CD4-positive, alpha-beta memory T cell (primary cell): ENCODE measurements at regions of chr17 and their contacts with region 1.

Region 1: GRCh38 chr17:50345432-50346312 is at the start of gene XYLT2:
- DNase-seq: peak; percentile 86 to 94 (median 93)
- H3K4me3 ChIP-seq: peak within 1 kb of the TSS; percentile 65 to 80
- H3K4me3 Mint-ChIP-seq: peak within 1 kb of the TSS; percentile 88 to 94 (median 91)
- H3K27ac ChIP-seq: peak within 1 kb of the TSS; percentile 72
- H3K27ac Mint-ChIP-seq: peak within 1 kb of the TSS; percentile 88 to 96 (median 92)
- H3K4me1 ChIP-seq: peaks cover 31% of the 10 kb centered on the region
- H3K4me1 Mint-ChIP-seq: peaks cover 15 to 55% (median 33%) of the 10 kb centered on the region in 4 donors
- H3K27me3 ChIP-seq: no peaks in the 10 kb centered on the region
- H3K27me3 Mint-ChIP-seq: no peaks in the 10 kb centered on the region
- total RNA-seq, gene XYLT2: 37.6 to 41.1 TPM

Region 2: DNA sequence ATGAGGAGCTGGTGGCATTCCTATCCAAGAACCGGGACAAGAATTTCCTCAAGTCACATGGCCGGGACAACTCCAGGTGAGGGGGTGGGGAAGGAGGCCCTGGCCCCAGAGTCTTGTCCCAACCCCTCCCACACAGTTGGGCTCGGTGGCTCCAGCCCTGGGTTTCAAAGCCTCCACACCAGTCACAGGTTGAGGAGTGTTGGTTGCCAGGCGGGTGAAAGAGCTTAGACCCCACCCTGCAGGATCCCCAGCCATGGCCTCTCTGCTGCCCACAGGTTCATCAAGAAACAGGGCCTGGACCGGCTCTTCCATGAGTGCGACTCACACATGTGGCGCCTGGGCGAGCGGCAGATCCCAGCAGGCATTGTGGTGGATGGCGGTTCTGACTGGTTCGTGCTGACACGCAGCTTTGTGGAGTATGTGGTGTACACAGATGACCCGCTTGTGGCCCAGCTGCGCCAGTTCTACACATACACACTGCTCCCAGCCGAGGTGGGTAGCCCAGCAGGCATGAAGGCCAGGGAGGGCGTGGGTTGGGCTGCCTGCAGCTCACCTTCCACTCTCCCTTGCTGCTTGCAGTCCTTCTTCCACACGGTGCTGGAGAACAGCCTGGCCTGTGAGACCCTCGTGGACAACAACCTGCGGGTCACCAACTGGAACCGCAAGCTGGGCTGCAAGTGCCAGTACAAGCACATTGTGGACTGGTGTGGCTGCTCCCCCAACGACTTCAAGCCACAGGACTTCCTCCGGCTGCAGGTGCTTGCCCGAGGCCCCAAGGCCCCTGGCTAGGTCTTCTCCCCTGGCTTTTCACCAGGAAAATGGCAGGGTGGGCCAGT is 10.1 kb after region 1 on chr17:
- CTCF ChIA-PET with region 1: interaction called, 35 read pairs
- POLR2A ChIA-PET with region 1: interaction called, 25 read pairs
- intact Hi-C with region 1: no loop called
- DNase-seq: no peak
- H3K4me3 ChIP-seq: no peak overlapping the region
- H3K4me3 Mint-ChIP-seq: no peak overlapping the region
- H3K27ac ChIP-seq: no peak overlapping the region
- H3K27ac Mint-ChIP-seq: no peak overlapping the region
- H3K4me1 ChIP-seq: no peaks in the 10 kb centered on the region
- H3K4me1 Mint-ChIP-seq: peaks cover 0 to 15% (median 10%) of the 10 kb centered on the region in 4 donors
- H3K27me3 ChIP-seq: no peaks in the 10 kb centered on the region
- H3K27me3 Mint-ChIP-seq: no peaks in the 10 kb centered on the region

Region 3: DNA sequence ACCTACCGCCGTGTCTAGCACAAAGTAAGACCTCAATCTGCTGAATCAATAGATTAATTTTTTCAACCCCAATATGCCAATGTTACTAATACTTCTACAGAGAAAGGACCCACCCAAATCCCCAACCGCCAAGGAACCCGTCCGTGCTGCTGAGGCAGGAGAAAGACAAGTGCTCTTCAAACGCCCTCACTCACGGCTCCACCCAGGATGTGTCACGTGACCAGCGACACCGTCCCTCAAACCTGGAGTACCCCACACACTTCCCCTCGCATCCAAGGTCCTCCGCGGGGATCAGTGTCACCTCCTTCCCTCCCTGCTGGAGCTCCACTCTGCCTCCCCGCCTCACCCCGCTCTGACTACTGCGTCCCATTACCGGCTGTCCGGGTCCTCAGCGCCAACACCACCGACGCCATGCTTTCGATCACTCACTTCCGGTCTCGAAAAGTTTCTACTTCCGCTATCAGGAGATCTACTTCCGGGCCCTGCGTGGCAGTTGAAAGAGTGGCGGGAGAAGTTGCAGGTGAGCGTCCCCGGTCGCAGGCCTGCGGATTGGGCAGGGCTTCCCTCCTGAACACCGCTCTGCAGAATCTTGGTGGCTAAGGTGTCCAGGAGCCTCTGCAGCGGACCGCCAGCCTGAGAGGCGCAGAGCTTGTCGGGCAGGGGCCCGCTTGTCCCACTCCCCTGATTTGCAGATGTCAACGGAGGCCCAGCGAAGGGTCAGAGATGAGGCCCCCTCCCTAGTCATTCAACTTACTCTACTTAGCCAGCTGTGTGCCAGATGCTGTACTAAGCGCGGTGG is 27.3 kb after region 1 on chr17 and contains the starts of genes EME1 and MRPL27:
- CTCF ChIA-PET with region 1: interaction called, 3 read pairs
- POLR2A ChIA-PET with region 1: interaction called, 14 read pairs
- intact Hi-C with region 1: loop called (anchors 1 kb)
- DNase-seq: peak; percentile 90 to 94 (median 90)
- H3K4me3 ChIP-seq: peak within 1 kb of the TSS; percentile 96 to 100
- H3K4me3 Mint-ChIP-seq: peak within 1 kb of the TSS; percentile 99 to 100 (median 100)
- H3K27ac ChIP-seq: peak within 1 kb of the TSS; percentile 98
- H3K27ac Mint-ChIP-seq: peak within 1 kb of the TSS; percentile 95 to 100 (median 100)
- H3K4me1 ChIP-seq: peaks cover 16% of the 10 kb centered on the region
- H3K4me1 Mint-ChIP-seq: peaks cover 15 to 29% (median 20%) of the 10 kb centered on the region in 4 donors
- H3K27me3 ChIP-seq: no peaks in the 10 kb centered on the region
- H3K27me3 Mint-ChIP-seq: no peaks in the 10 kb centered on the region
- total RNA-seq, gene EME1: 0.41 to 0.89 TPM
- total RNA-seq, gene MRPL27: 30.0 to 32.9 TPM